Psoas muscle (tissue), 8 donors: ENCODE measurements at regions of chr11 and their contacts with region 1.

Region 1: DNA sequence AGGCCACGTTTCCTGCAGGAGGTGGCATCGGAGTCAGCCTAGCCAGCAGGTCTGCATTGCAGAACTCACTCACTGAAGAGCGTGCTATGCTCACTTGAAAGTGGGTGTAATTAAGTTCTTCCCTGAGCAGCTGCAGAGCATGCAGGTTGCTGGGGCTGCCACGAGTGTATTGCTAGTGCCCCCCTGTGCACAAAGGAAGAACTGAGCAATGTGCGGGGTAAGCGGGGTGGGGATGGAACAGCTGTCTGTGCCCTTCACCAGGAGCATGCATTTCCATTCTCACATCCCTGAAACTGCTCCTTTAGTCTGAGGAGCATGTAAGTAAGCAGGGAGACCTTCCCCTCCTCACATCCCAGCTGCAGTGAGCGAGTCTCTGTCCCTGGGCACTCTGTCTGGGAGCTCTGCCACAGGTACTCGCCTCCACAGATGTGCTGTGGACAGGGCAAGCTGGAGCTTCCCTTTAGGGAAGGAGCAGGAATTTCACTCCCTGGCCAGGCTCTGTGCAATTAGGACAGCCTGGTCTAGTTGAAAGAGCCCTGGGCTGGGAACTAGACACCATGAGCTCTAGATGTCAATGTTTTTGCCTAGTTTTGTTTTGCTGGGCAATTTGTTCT is 1031.8 kb downstream of the NTM start:
- DNase-seq: no peak
- ATAC-seq: peak in 2 of 4 donors; percentile 57 to 58
- H3K4me3 ChIP-seq: no peak overlapping the region
- H3K27ac ChIP-seq: no peak overlapping the region
- H3K4me1 ChIP-seq: no peaks in the 10 kb centered on the region
- H3K27me3 ChIP-seq: peaks cover 0 to 4% (median 3%) of the 10 kb centered on the region in 3 donors
- CTCF ChIP-seq: no peak

Region 2: GRCh38 chr11:132114185-132114584 is 288.0 kb before region 1 on chr11:
- intact Hi-C with region 1: loop called in 1 of 2 experiments (anchors 10 kb)
- DNase-seq: no peak
- ATAC-seq: peak in 3 of 4 donors; percentile 61 to 79 (median 67)
- H3K4me3 ChIP-seq: no peak overlapping the region
- H3K27ac ChIP-seq: no peak overlapping the region
- H3K4me1 ChIP-seq: no peaks in the 10 kb centered on the region
- H3K27me3 ChIP-seq: no peaks in the 10 kb centered on the region
- CTCF ChIP-seq: peak; percentile 23